ENCODE measurements at regions of chr13 and their contacts with region 1.

Region 1: GRCh38 chr13:27362064-27362883 is 62.1 kb upstream of the GTF3A start:
- DNase-seq: no peak
- H3K4me3 ChIP-seq: peak overlapping the region; percentile 64
- CTCF ChIP-seq: peak; percentile 97

Region 2: DNA sequence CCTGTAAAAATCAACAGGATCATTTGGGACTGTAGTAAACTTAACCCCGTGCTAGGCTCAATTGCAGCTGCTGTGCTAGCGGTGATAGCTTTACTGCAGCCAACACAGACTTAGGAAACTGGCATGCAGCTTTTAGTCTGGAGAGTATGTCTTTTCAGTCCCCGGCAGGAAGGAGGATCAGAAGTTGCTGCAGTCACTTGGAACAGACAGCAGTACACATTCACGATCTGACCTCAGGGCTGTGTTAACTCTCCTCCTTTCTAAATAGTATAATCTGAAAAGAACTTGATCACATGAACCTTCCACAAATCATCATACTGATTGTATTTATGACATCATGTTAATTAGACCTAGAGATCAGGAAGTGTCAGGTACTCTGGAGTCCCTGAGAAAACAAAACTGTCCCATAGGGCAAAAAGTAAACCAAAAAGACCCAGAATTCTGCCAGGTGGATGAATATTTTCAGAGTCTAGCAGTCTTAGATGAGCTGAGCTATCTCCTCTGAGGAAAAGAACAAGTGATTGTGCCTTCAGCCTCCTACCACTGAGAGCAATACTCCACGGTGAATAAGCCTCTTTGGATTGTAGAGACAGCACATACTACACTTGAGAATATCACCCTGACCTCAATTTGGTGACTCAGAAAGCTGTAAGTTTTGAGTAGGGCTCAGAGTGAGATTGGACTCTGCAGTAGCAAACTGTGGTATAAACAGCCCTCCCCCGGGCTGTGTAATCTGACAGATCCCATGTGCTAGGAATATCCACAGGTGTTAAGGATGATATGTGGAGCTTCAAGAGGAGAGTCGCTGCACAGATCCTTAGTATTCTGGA is 420.7 kb before region 1 on chr13:
- CTCF ChIA-PET with region 1: interaction called, 228 read pairs
- POLR2A ChIA-PET with region 1: no interaction called
- DNase-seq: peak; percentile 45
- H3K4me3 ChIP-seq: no peak overlapping the region
- CTCF ChIP-seq: no peak

Region 3: DNA sequence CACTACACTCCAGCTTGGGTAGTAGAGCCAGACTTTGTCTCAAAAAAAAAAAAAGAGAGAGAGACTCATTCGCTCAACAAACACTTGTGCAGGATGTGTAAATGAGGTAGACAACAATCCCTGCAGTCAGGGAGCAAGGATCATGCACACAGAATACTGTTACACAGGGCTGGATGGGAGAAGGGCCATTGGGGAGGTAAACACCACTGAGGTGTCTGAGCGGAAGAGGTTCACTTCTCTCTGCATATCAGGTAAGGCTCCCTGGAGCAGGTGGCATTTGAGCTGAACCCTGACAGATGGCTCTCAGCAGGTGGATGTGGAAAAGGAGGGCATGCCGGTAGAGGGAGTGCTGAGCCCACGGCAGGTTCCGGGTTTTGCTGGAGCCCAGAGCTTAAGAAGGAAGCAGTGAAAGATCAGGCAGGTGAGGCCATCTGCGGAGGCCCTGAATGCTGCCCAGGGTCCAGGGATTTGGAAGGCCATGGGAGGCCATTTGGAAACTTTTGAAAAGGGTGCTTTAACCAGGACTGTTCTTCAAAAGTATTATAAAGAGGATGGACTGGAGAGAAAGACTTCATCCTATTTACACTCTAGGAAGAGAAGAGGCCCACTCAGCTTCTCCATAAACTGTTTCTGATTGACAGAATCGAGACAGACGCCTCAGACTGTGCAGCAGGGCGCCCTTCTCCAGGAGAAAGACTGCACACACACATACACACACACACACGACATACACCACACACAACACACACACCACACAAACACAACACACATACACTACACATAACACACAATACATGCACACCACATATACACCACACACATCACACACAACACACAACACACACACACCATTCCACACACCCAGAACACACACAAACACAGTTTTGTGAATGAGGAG is 390.0 kb before region 1 on chr13:
- CTCF ChIA-PET with region 1: interaction called, 73 read pairs
- POLR2A ChIA-PET with region 1: no interaction called
- DNase-seq: no peak
- H3K4me3 ChIP-seq: no peak overlapping the region
- CTCF ChIP-seq: peak; percentile 36

Region 4: DNA sequence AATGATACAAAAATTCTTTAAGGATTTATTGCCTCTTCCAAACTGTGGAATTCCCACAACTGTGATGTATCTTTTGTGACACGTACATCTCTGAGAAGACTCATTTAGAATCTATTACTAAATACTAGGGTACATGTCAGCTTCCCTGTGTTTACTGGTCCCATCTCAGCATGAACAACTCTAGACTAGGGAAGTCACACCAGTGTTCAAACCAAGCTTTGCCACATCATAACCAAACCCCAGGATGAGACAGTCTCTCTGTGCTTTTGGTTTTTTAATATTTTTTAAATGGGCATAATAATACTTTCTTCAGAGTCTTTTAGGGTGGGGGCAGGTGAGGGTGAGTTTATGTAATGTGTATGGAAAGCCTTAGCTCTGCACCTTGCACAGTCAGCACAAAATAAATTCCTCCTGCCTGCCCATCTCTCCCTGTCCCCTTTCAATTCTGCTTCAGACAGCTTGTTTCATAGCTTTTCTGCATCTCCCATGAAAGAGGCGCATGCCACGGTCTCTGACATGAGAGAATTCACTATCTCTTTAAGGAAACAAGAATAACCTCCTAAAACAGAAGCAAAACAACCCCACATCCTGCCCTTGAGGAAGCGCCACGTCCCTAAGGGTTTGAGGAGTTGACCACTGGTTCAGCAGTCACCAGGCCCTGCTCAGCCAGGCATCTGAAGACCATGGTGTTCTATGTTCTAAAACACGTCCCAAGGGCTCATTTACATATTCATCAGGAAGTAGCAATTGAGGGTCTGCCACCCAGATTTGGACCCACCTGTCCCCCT is 365.1 kb before region 1 on chr13:
- CTCF ChIA-PET with region 1: interaction called, 26 read pairs
- POLR2A ChIA-PET with region 1: no interaction called
- DNase-seq: no peak
- H3K4me3 ChIP-seq: no peak overlapping the region
- CTCF ChIP-seq: no peak

Region 5: GRCh38 chr13:27424246-27425157 is 62.2 kb after region 1 on chr13 and contains the start of gene GTF3A:
- CTCF ChIA-PET with region 1: interaction called, 22 read pairs
- POLR2A ChIA-PET with region 1: no interaction called
- DNase-seq: no peak
- H3K4me3 ChIP-seq: peak within 1 kb of the TSS; percentile 83
- CTCF ChIP-seq: no peak

Region 6: DNA sequence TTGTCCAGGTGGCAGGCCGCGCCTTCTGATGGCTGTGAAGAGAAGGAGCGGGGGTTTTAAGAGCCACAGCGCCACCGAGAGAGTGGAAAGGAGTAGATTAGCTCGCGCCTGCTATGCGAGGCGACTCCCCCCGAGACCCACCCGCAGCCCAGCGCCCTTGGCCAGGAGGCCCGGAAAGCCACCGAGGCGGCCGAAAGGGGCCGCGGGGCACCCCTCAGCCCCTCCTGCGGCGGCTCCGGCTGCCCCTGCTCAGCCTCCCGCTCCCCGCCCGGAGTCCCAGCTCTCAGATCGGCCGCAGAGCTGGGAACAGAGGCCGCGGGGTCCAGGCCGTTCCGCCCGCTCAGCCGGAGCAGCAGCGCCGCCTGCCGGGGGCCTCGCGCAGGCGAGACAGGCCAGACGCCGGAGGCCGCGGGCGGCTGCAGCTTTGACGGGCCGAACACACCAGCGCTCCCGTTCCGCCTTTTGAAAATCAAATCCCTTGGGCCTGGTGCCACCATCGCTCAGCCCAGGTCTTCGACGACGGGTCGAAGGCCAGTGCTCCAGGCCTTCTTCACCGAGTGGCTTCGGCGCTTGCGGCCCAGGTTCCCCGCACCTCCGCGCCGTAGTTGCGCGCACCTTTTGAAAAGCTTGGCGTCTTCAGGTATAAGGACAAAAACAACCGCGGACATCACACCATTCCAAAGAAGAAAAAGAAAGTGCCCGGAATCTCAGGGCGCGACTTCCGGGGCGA is 591.6 kb after region 1 on chr13:
- CTCF ChIA-PET with region 1: interaction called, 45 read pairs
- POLR2A ChIA-PET with region 1: no interaction called
- DNase-seq: no peak
- H3K4me3 ChIP-seq: peak overlapping the region; percentile 56
- CTCF ChIP-seq: peak; percentile 84